HepG2 (cell line): ENCODE measurements at regions of chr20 and their contacts with region 1.

Region 1: DNA sequence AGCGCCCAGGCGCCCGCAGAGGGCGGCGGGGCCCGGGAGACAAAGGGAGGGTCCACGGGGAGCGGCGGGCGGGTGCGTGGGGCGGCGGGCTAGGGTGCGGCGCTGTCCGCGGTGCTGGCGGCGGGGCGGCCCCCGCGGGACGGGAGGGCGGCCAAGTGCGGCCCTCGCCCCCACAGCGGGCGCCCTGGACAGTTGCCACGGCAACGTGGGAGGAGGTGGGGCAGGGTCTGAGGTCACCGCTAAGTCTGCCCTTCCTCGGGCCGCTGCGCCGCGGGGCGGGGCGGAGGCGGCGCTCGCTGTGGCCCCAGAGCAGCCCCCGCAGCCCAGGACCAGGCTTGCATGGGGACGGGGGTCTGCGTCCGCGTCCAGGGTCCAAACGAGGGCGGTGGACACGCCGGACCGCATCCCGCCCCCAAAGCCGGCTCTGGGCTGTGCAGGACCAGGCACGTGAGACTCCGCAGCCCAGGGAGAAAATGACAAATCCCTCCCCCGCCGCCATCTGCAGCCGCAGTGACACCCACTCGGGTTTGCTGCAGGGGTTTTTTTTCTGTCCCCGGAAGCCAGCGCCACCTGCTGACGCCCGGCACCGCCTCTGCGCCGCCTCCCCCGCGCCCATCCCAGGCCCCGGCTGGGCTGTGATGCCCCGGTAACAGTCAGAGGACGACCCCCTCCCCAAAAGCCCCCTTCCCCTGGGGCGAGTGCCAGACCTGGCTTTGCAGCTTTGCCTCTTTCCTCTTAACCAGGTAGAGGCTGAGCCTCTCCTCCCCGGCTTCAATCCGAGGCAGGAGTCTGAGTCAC is 36.8 kb downstream of the YTHDF1 start:
- DNase-seq: no peak
- ATAC-seq: peak; percentile 9; the same call in 1 of the 3 replicates
- H3K4me3 ChIP-seq: peak overlapping the region in 1 of 3 experiments; percentile 30; a peak in 1 of 6 replicates
- H3K27ac ChIP-seq: no peak overlapping the region
- H3K4me1 ChIP-seq: peaks cover 8% of the 10 kb centered on the region
- H3K27me3 ChIP-seq: peaks cover 18 to 86% of the 10 kb centered on the region in 2 experiments
- CTCF ChIP-seq: peak; percentile 76
- EP300 ChIP-seq: no peak
- POLR2A ChIP-seq: no peak
- RAD21 ChIP-seq: peak; percentile 72

Region 2: DNA sequence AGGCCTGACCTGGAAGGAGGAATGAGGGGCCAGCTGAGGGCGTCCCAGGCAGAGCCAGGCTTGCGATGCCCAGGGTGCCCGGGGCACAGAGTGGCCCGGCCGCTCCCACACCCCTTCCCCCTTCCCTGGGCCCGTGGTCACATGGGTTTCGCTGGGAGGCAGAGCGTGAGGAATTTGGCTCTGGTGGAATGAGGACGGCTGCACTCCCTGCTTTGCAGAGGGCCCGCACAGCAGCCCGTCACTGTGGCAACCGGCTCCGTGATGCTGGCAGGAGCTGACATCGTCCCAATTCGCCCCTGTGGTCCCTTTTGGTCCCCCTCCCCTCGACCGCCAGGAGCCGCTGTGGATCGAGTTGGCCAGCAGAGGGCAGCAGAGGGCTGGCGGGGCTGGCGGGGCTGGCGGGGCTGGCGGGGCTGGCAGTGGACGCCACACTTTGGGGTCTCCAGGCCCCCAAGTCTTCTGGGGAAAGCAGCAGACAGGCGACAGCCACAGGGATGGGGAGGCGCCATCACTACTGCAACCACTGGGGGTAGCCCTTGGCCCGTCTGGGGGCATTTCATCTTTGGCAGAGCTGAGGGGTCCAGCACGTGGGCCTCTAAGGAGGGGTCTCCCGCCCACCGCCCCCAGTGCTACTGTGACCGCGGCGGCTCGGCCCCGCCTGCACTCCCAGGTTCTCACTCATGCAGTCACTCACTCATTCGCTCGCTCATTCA is 122.7 kb before region 1 on chr20:
- CTCF ChIA-PET with region 1: interaction called, 10 read pairs
- POLR2A ChIA-PET with region 1: no interaction called
- in situ Hi-C with region 1: loop called (anchors 5 kb)
- intact Hi-C with region 1: no loop called
- DNase-seq: no peak
- ATAC-seq: peak; percentile 65
- H3K4me3 ChIP-seq: no peak overlapping the region
- H3K27ac ChIP-seq: no peak overlapping the region
- H3K4me1 ChIP-seq: peaks cover 9% of the 10 kb centered on the region
- H3K27me3 ChIP-seq: peaks cover 25 to 77% of the 10 kb centered on the region in 2 experiments
- CTCF ChIP-seq: peak; percentile 96
- EP300 ChIP-seq: no peak
- POLR2A ChIP-seq: no peak
- RAD21 ChIP-seq: peak; percentile 91

Region 3: DNA sequence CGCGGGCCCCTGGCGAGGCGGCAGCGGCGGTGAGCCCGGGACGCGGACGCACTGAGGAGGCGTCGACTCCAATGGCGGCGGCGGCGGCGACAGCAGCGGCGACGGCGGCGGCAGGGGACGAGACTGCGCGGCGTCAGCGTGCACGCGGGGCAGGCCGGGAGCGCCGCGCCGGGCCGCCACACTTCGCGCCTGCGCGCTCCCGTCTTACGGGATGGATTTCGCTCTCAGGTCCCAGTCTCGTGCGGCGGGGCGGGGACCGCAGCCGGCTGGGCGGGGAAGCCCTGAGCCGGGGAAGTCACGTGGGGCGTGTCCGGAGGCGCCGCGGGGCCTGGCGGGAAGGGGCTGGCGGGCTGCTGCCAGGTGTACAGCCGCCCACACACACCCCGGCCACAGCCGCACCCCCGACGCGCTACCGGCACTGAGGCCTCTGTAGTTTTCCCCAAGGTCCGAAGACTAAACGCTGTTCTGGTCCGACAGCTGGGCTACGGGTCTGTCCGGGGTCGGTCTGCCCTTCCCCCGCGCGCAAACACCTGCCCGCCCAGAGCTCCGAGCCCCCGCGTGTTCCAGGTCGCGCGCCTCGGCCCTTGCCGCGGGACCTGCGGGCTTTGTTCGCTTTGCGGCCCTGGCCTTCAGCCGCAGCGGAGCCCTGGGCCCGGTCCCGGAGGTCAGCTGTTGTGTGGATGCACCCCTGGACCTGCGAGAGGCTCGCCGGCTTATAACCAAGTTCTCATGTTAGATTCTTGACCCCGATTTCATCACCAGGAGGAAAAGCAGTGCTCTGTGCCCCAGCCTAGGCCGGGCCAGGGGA is 37.2 kb after region 1 on chr20 and contains the start of gene YTHDF1:
- CTCF ChIA-PET with region 1: interaction called, 18 read pairs
- POLR2A ChIA-PET with region 1: no interaction called
- in situ Hi-C with region 1: no loop called
- intact Hi-C with region 1: loop called (anchors 5 kb)
- DNase-seq: peak; percentile 96
- ATAC-seq: peak; percentile 88
- H3K4me3 ChIP-seq: peak within 1 kb of the TSS; percentile 74 to 97 (median 80)
- H3K27ac ChIP-seq: peak within 1 kb of the TSS; percentile 70
- H3K4me1 ChIP-seq: peaks cover 60% of the 10 kb centered on the region
- H3K27me3 ChIP-seq: peaks cover 19 to 38% of the 10 kb centered on the region in 2 experiments; a peak in 4 of 5 replicates
- CTCF ChIP-seq: peak; percentile 20
- EP300 ChIP-seq: peak in 1 of 2 experiments; percentile 57
- POLR2A ChIP-seq: peak; percentile 75 to 95
- RAD21 ChIP-seq: 0 out of 2 replicates have a peak, but pooled peaks have one; percentile 50
- total RNA-seq, gene YTHDF1: 37.7 and 39.8 TPM in 2 replicates

Region 4: DNA sequence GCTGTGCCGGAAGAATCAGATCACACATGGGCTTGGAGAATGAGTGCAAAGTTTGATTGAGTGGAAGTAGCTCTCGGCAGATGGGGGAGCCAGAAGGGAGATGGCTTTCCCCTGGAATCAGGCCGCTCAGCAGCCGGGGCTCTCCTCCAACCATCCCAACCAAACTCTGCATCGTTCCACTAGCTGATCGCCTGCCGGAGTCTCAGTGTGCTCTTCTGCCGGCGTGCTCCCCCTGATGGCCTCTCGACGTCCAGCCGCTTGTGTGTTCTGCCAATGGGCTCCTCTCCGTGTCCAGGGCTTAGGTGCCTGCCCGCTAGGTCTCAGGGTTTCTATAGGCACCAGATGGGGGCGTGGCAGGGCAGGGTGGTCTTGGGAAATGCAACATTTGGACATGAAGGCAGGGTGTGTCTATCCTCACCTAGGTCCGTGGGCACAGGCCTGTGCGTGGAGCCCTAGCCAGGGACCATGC is 51.7 kb after region 1 on chr20:
- CTCF ChIA-PET with region 1: interaction called, 6 read pairs
- POLR2A ChIA-PET with region 1: no interaction called
- in situ Hi-C with region 1: no loop called
- intact Hi-C with region 1: loop called (anchors 5 kb)
- DNase-seq: peak; percentile 79
- ATAC-seq: peak; percentile 89
- H3K4me3 ChIP-seq: peak overlapping the region in 1 of 3 experiments; percentile 54; a peak in 3 of 6 replicates
- H3K27ac ChIP-seq: no peak overlapping the region
- H3K4me1 ChIP-seq: peaks cover 34% of the 10 kb centered on the region
- H3K27me3 ChIP-seq: peaks cover 17 to 74% of the 10 kb centered on the region in 2 experiments; a peak in 4 of 5 replicates
- CTCF ChIP-seq: peak; percentile 93
- EP300 ChIP-seq: no peak
- POLR2A ChIP-seq: no peak
- RAD21 ChIP-seq: peak; percentile 74

Region 5: DNA sequence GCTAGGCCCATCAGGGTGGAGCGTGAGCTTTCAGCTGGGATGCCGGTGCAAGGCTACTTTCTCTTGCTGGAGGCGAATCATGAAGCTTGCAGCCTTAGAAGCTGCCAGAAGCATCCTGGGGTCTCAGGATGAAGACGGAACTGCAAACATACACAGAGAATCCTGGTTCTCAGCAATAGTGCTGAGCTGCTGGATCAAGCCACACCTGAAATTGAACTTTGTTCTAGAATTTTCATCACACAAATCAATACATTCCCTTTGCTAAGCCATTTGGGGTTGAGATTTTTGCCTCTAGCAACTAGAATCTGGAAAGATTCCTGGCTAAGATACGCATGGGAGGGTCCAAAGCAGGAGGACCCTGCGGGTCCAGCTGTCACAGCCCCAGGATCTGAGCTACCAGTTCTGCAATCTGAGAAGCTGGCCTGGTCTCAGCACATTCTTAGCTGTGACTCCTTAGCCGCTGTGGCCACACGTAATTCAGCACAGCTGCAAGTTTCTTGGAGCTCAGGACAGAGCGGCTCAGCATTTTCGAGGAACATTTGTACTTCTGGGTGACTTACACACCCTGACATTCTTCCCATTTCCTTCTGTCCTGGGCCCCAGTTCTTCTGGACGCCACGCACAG is 86.9 kb after region 1 on chr20:
- CTCF ChIA-PET with region 1: no interaction called
- POLR2A ChIA-PET with region 1: no interaction called
- in situ Hi-C with region 1: no loop called
- intact Hi-C with region 1: loop called (anchors 1 kb)
- DNase-seq: no peak
- ATAC-seq: no peak
- H3K4me3 ChIP-seq: no peak overlapping the region
- H3K27ac ChIP-seq: no peak overlapping the region
- H3K4me1 ChIP-seq: peaks cover 48% of the 10 kb centered on the region
- H3K27me3 ChIP-seq: peaks cover 11 to 50% of the 10 kb centered on the region in 2 experiments; a peak in 4 of 5 replicates
- CTCF ChIP-seq: no peak
- EP300 ChIP-seq: no peak
- POLR2A ChIP-seq: no peak
- RAD21 ChIP-seq: no peak

Region 6: GRCh38 chr20:63290677-63291472 is 111.8 kb after region 1 on chr20:
- CTCF ChIA-PET with region 1: interaction called, 4 read pairs
- POLR2A ChIA-PET with region 1: no interaction called
- in situ Hi-C with region 1: no loop called
- intact Hi-C with region 1: loop called (anchors 5 kb)
- DNase-seq: peak; percentile 41
- ATAC-seq: peak; percentile 71
- H3K4me3 ChIP-seq: peak overlapping the region in 1 of 3 experiments; percentile 13; a peak in 1 of 6 replicates
- H3K27ac ChIP-seq: no peak overlapping the region
- H3K4me1 ChIP-seq: peaks cover 15% of the 10 kb centered on the region
- H3K27me3 ChIP-seq: peaks cover 12 to 37% of the 10 kb centered on the region in 2 experiments; a peak in 4 of 5 replicates
- CTCF ChIP-seq: peak; percentile 96
- EP300 ChIP-seq: no peak
- POLR2A ChIP-seq: peak; percentile 2 to 56; a peak in 2 of 4 replicates
- RAD21 ChIP-seq: peak; percentile 86